Activated CD4-positive, alpha-beta T cell treated with anti-CD3 and anti-CD28 coated beads, Interleukin-2, amount 10 ng/mL, durations not matched to agents 24 days and 14 days (primary cell): ENCODE measurements at regions of chr3 and their contacts with region 1.

Region 1: GRCh38 chr3:100665230-100665629 is 44.1 kb upstream of the TFG start:
- DNase-seq: peak; percentile 86
- H3K4me3 Mint-ChIP-seq: peak overlapping the region; percentile 59
- H3K27ac Mint-ChIP-seq: peak overlapping the region; percentile 81
- H3K4me1 Mint-ChIP-seq: peaks cover 27% of the 10 kb centered on the region
- H3K27me3 Mint-ChIP-seq: no peaks in the 10 kb centered on the region

Region 2: DNA sequence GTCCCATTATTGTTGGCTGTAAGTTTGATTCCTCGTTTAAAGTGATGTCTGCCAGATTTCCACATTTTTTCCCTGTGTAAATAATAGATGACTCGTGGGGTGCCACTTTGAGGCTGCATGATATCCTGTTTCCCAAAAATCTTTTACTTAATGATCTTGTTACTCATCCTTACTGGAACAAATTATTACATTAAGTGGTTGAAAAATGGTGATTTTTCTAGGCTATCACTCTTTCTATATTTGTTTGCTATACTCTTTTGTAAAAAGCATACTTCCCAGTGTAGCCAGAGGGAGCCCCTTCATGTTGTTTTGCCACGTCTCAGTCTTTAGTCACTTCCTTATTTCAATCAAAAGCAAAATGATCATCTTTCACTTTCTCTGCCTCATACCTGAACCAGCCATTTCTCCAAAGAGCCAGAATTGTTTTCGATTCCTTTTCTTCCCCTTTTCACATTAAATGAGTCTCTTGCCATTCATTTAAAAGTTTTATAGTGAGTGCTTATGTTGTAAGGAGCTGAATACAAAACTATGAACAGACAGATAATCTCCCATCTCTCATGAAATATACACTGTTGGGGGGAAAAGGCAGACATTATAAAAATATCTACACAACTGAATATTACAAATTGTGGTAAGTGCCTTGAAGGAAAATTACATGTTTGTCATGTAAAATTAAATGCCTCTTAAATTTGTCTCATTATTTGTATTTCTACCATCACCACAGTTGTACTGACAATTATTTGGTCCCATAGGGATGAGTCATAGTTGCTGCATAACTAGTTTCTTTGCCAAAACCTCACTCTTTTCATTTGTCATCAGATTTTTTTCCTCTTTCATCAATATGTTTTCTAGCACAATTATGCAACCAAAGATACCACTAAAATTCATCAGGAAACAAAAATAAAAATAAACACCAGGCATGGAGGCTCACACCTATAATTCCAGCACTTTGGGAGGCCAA is 14.3 kb before region 1 on chr3:
- intact Hi-C with region 1: loop called (anchors 1 kb)
- DNase-seq: peak; percentile 73
- H3K4me3 Mint-ChIP-seq: peak overlapping the region; percentile 58
- H3K27ac Mint-ChIP-seq: peak overlapping the region; percentile 75
- H3K4me1 Mint-ChIP-seq: peaks cover 12% of the 10 kb centered on the region
- H3K27me3 Mint-ChIP-seq: peaks cover 2% of the 10 kb centered on the region